ENCODE measurements at regions of chr1 and their contacts with region 1.

Region 1: DNA sequence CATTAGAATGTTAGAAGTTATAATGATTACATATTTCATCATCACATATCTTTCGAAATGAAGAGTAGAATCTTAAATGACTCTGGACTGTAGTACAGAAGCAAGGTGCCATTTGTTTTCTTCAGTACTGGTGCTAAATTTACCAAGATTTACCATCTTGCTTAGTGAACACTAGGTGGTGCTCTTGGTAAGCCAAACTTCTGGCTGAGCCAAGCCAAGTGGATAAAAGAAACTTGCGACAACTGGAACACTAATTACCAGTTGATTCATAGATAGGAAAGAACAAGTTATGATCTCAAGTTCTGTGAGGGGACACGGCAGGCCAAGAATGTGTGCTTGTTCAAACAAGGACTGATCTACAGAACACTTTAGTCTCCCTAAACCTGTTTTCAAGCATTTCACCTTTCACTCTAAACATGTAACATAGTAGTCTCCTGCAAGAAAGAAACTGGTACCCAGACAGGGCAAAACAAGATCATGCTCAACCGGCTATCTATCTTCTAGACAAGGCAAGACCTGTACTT is 19.8 kb downstream of the SPRTN start:
- DNase-seq: peak; percentile 54 to 77 (median 73)
- H3K4me3 ChIP-seq: no peak overlapping the region
- H3K27ac ChIP-seq: no peak overlapping the region
- H3K4me1 ChIP-seq: peaks cover 0 to 4% (median 0%) of the 10 kb centered on the region in 4 experiments
- H3K27me3 ChIP-seq: no peaks in the 10 kb centered on the region

Region 2: GRCh38 chr1:231286603-231287002 is 71.3 kb before region 1 on chr1:
- CTCF ChIA-PET with region 1: no interaction called
- POLR2A ChIA-PET with region 1: no interaction called
- DNase-seq: peak in 1 of 3 donors; percentile 1
- H3K4me3 ChIP-seq: no peak overlapping the region
- H3K27ac ChIP-seq: no peak overlapping the region
- H3K4me1 ChIP-seq: no peaks in the 10 kb centered on the region
- H3K27me3 ChIP-seq: no peaks in the 10 kb centered on the region

Region 3: GRCh38 chr1:231372501-231372900 is 14.6 kb after region 1 on chr1:
- CTCF ChIA-PET with region 1: interaction called, 11 read pairs
- POLR2A ChIA-PET with region 1: interaction called, 3 read pairs
- DNase-seq: no peak
- H3K4me3 ChIP-seq: no peak overlapping the region
- H3K27ac ChIP-seq: no peak overlapping the region
- H3K4me1 ChIP-seq: peaks cover 0 to 10% (median 6%) of the 10 kb centered on the region in 4 experiments
- H3K27me3 ChIP-seq: no peaks in the 10 kb centered on the region

Region 4: GRCh38 chr1:231393668-231394067 is 35.8 kb after region 1 on chr1:
- CTCF ChIA-PET with region 1: no interaction called
- POLR2A ChIA-PET with region 1: no interaction called
- DNase-seq: no peak
- H3K4me3 ChIP-seq: no peak overlapping the region
- H3K27ac ChIP-seq: no peak overlapping the region
- H3K4me1 ChIP-seq: peaks cover 0 to 19% (median 10%) of the 10 kb centered on the region in 4 experiments
- H3K27me3 ChIP-seq: no peaks in the 10 kb centered on the region

Region 5: DNA sequence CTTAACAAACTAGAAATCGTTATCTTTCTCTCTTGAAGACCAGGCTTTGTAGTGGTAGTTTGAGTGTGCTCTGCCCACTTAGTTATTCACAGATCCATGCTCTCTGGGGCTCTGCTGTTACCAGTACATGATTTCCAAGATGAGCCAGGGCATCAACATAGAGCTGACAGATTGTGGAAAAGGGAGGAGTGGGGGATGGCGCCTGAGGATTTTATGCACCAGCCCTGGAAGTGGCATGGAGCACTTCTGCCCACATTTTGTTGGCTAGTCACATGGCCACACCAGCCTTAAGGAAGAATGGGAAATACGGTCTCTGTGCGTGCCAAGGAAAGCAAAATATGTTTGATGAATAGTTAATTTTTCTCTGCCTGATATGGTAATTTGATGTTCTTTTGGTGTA is 188.8 kb after region 1 on chr1:
- CTCF ChIA-PET with region 1: interaction called, 10 read pairs
- POLR2A ChIA-PET with region 1: no interaction called
- DNase-seq: no peak
- H3K4me3 ChIP-seq: no peak overlapping the region
- H3K27ac ChIP-seq: no peak overlapping the region
- H3K4me1 ChIP-seq: no peaks in the 10 kb centered on the region
- H3K27me3 ChIP-seq: no peaks in the 10 kb centered on the region

Region 6: DNA sequence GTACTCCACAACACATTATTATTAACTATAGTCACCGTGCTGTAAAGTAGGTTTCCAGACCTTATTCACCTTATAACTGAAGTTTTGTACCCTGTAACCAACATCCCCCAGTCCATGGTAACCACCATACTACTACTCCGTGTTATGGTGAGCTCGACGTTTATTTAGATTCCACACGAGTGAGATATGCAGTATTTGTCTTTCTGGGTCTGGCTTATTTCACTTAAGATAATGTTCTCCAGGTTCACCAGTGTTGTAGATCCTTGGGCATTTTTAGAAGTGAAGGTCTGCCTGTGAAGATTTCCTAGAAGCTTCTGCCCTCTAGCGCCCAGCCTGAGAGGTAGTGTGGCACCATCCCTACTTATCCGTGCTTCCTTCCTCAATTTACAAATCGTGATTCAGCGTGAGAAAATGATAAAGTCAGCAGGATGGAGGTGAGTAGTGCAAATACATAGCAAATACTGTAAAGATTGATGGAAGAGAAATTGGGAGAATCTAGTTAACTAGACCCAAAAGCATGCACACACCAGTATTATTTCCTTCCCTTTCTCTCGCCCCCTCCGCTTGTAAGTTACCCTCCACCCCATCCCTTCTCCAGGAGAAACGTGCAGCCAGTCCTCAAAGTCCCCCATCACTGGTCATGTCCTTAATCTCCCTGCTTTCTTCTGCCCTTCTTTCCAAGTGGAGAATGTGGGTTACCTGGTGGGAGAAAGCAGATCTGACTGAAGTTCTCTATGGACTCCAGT is 232.7 kb after region 1 on chr1:
- CTCF ChIA-PET with region 1: interaction called, 46 read pairs
- POLR2A ChIA-PET with region 1: no interaction called
- DNase-seq: peak; percentile 67 to 80 (median 77)
- H3K4me3 ChIP-seq: no peak overlapping the region
- H3K27ac ChIP-seq: no peak overlapping the region
- H3K4me1 ChIP-seq: peaks cover 0 to 4% (median 0%) of the 10 kb centered on the region in 4 experiments
- H3K27me3 ChIP-seq: no peaks in the 10 kb centered on the region

Region 7: GRCh38 chr1:231606707-231607106 is 248.8 kb after region 1 on chr1:
- CTCF ChIA-PET with region 1: interaction called, 13 read pairs
- POLR2A ChIA-PET with region 1: no interaction called
- DNase-seq: no peak
- H3K4me3 ChIP-seq: no peak overlapping the region
- H3K27ac ChIP-seq: no peak overlapping the region
- H3K4me1 ChIP-seq: peaks cover 3 to 31% (median 14%) of the 10 kb centered on the region in 4 experiments
- H3K27me3 ChIP-seq: no peaks in the 10 kb centered on the region

Measured in common myeloid progenitor, CD34-positive (primary cell).